ENCODE measurements at regions of chr5 and their contacts with region 1.

Region 1: GRCh38 chr5:34898258-34898895 is 16.9 kb downstream of the RAD1 start:
- DNase-seq: no peak
- ATAC-seq: peak; percentile 93
- H3K4me3 ChIP-seq: no peak overlapping the region
- H3K27ac ChIP-seq: no peak overlapping the region
- H3K4me1 ChIP-seq: no peaks in the 10 kb centered on the region
- H3K27me3 ChIP-seq: no peaks in the 10 kb centered on the region
- CTCF ChIP-seq: peak; percentile 89

Region 2: DNA sequence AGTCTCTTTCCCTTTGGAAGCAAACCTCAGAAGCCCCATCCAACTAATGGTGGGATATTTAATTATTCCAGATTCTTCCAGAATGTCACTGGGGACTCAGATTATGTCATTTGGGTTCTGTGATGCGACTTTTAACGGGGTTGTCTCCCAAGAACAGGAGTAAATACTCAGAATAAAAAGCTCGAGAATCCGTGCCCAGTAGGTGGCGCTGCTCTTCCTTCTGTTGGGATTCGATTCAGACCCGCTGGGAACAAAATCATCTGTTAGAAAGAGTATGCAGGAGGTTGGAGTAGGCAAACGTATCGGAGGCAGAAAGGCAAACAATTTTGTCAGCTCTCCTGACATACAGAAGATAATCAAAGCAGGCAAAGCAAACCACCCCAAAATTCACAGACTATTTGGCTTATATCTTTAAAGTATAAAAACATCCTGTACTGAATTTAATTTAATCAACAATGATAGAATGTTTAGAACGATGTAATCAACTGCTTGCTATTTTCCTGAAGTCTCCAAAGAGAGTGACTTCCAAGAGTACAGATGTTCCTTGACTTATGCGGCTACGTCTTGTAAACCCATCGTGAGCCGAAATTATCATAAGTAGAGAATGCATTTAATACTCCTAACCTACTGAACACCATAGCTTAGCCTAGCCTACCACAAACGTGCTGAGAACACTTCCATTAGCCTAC is 412.1 kb before region 1 on chr5:
- intact Hi-C with region 1: loop called (anchors 5 kb)
- DNase-seq: peak; percentile 87
- ATAC-seq: peak; percentile 82
- H3K4me3 ChIP-seq: no peak overlapping the region
- H3K27ac ChIP-seq: peak overlapping the region; percentile 72
- H3K4me1 ChIP-seq: peaks cover 17% of the 10 kb centered on the region
- H3K27me3 ChIP-seq: no peaks in the 10 kb centered on the region
- CTCF ChIP-seq: peak; percentile 84

Region 3: GRCh38 chr5:34547300-34548085 is 350.9 kb before region 1 on chr5:
- intact Hi-C with region 1: loop called (anchors 10 kb)
- DNase-seq: no peak
- ATAC-seq: no peak
- H3K4me3 ChIP-seq: no peak overlapping the region
- H3K27ac ChIP-seq: no peak overlapping the region
- H3K4me1 ChIP-seq: no peaks in the 10 kb centered on the region
- H3K27me3 ChIP-seq: no peaks in the 10 kb centered on the region
- CTCF ChIP-seq: no peak

Measured in upper lobe of right lung (tissue), 1 donor.